CD8-positive, alpha-beta memory T cell (primary cell): ENCODE measurements at regions of chr19 and their contacts with region 1.

Region 1: GRCh38 chr19:8615813-8616596 is 5.5 kb upstream of the ADAMTS10 start:
- DNase-seq: peak; percentile 45 to 69 (median 50)
- H3K4me3 ChIP-seq: no peak overlapping the region
- H3K4me3 Mint-ChIP-seq: peak overlapping the region in 1 of 7 donors; percentile 26
- H3K27ac ChIP-seq: no peak overlapping the region
- H3K27ac Mint-ChIP-seq: peak overlapping the region in 3 of 8 donors; percentile 12 to 64 (median 61)
- H3K4me1 ChIP-seq: peaks cover 27% of the 10 kb centered on the region
- H3K4me1 Mint-ChIP-seq: peaks cover 21 to 27% (median 23%) of the 10 kb centered on the region in 3 donors
- H3K27me3 ChIP-seq: no peaks in the 10 kb centered on the region
- H3K27me3 Mint-ChIP-seq: peaks cover 2 to 7% of the 10 kb centered on the region in 2 donors

Region 2: GRCh38 chr19:8569066-8569771 is 46.8 kb before region 1 on chr19:
- CTCF ChIA-PET with region 1: interaction called, 4 read pairs
- POLR2A ChIA-PET with region 1: interaction called, 10 read pairs
- DNase-seq: peak; percentile 44 to 92 (median 74)
- H3K4me3 ChIP-seq: peak overlapping the region; percentile 59
- H3K4me3 Mint-ChIP-seq: peak overlapping the region; percentile 77 to 100 (median 97)
- H3K27ac ChIP-seq: peak overlapping the region; percentile 63
- H3K27ac Mint-ChIP-seq: peak overlapping the region; percentile 74 to 99 (median 94)
- H3K4me1 ChIP-seq: peaks cover 81% of the 10 kb centered on the region
- H3K4me1 Mint-ChIP-seq: peaks cover 73 to 90% (median 78%) of the 10 kb centered on the region in 3 donors
- H3K27me3 ChIP-seq: no peaks in the 10 kb centered on the region
- H3K27me3 Mint-ChIP-seq: peaks cover 0 to 3% of the 10 kb centered on the region in 2 donors

Region 3: GRCh38 chr19:8631425-8631819 is 15.4 kb after region 1 on chr19:
- CTCF ChIA-PET with region 1: no interaction called
- POLR2A ChIA-PET with region 1: no interaction called
- DNase-seq: no peak
- H3K4me3 ChIP-seq: no peak overlapping the region
- H3K4me3 Mint-ChIP-seq: no peak overlapping the region
- H3K27ac ChIP-seq: no peak overlapping the region
- H3K27ac Mint-ChIP-seq: no peak overlapping the region
- H3K4me1 ChIP-seq: no peaks in the 10 kb centered on the region
- H3K4me1 Mint-ChIP-seq: no peaks in the 10 kb centered on the region
- H3K27me3 ChIP-seq: no peaks in the 10 kb centered on the region
- H3K27me3 Mint-ChIP-seq: peaks cover 3% of the 10 kb centered on the region in 2 donors

Region 4: GRCh38 chr19:8673276-8673891 is 57.4 kb after region 1 on chr19:
- CTCF ChIA-PET with region 1: no interaction called
- POLR2A ChIA-PET with region 1: no interaction called
- DNase-seq: no peak
- H3K4me3 ChIP-seq: no peak overlapping the region
- H3K4me3 Mint-ChIP-seq: no peak overlapping the region
- H3K27ac ChIP-seq: no peak overlapping the region
- H3K27ac Mint-ChIP-seq: no peak overlapping the region
- H3K4me1 ChIP-seq: peaks cover 26% of the 10 kb centered on the region
- H3K4me1 Mint-ChIP-seq: peaks cover 31 to 50% (median 43%) of the 10 kb centered on the region in 3 donors
- H3K27me3 ChIP-seq: no peaks in the 10 kb centered on the region
- H3K27me3 Mint-ChIP-seq: peaks cover 0 to 1% of the 10 kb centered on the region in 2 donors

Region 5: GRCh38 chr19:9435279-9436268 is 819.6 kb after region 1 on chr19 and contains the start of gene ZNF266:
- CTCF ChIA-PET with region 1: no interaction called
- POLR2A ChIA-PET with region 1: interaction called, 10 read pairs
- DNase-seq: peak; percentile 89 to 95 (median 91)
- H3K4me3 ChIP-seq: peak within 1 kb of the TSS; percentile 89
- H3K4me3 Mint-ChIP-seq: peak within 1 kb of the TSS; percentile 94 to 98 (median 96)
- H3K27ac ChIP-seq: peak within 1 kb of the TSS; percentile 95
- H3K27ac Mint-ChIP-seq: peak within 1 kb of the TSS; percentile 96 to 100 (median 98)
- H3K4me1 ChIP-seq: peaks cover 33% of the 10 kb centered on the region
- H3K4me1 Mint-ChIP-seq: peaks cover 42 to 56% (median 55%) of the 10 kb centered on the region in 3 donors
- H3K27me3 ChIP-seq: no peaks in the 10 kb centered on the region
- H3K27me3 Mint-ChIP-seq: peaks cover 0 to 1% of the 10 kb centered on the region in 2 donors
- total RNA-seq, gene ZNF266: 34.7 to 35.6 TPM